K562 (cell line): ENCODE measurements at regions of chr19 and their contacts with region 1.

Region 1: GRCh38 chr19:6125571-6125989 is 9.9 kb upstream of the ACSBG2 start:
- DNase-seq: peak; percentile 70 to 85 (median 75)
- ATAC-seq: peak; percentile 93
- H3K4me3 ChIP-seq: no peak overlapping the region
- H3K27ac ChIP-seq: no peak overlapping the region
- H3K4me1 ChIP-seq: no peaks in the 10 kb centered on the region
- H3K27me3 ChIP-seq: no peaks in the 10 kb centered on the region
- CTCF ChIP-seq: peak; percentile 94 to 95 (median 95)
- EP300 ChIP-seq: no peak
- POLR2A ChIP-seq: no peak
- RAD21 ChIP-seq: peak; percentile 93 to 99

Region 2: GRCh38 chr19:5987077-5987818 is 138.3 kb before region 1 on chr19:
- CTCF ChIA-PET with region 1: interaction called, 3 read pairs
- POLR2A ChIA-PET with region 1: no interaction called
- in situ Hi-C with region 1: no loop called
- intact Hi-C with region 1: loop called (anchors 2 kb)
- DNase-seq: peak; percentile 63 to 87 (median 74)
- ATAC-seq: peak; percentile 22
- H3K4me3 ChIP-seq: peak overlapping the region; percentile 22
- H3K27ac ChIP-seq: peak overlapping the region; percentile 48
- H3K4me1 ChIP-seq: peaks cover 44 to 46% of the 10 kb centered on the region in 2 experiments
- H3K27me3 ChIP-seq: no peaks in the 10 kb centered on the region
- CTCF ChIP-seq: peak; percentile 87 to 96 (median 94)
- EP300 ChIP-seq: peak; percentile 32; the same call in 1 of the 2 replicates
- POLR2A ChIP-seq: no peak
- RAD21 ChIP-seq: peak; percentile 69 to 81

Region 3: DNA sequence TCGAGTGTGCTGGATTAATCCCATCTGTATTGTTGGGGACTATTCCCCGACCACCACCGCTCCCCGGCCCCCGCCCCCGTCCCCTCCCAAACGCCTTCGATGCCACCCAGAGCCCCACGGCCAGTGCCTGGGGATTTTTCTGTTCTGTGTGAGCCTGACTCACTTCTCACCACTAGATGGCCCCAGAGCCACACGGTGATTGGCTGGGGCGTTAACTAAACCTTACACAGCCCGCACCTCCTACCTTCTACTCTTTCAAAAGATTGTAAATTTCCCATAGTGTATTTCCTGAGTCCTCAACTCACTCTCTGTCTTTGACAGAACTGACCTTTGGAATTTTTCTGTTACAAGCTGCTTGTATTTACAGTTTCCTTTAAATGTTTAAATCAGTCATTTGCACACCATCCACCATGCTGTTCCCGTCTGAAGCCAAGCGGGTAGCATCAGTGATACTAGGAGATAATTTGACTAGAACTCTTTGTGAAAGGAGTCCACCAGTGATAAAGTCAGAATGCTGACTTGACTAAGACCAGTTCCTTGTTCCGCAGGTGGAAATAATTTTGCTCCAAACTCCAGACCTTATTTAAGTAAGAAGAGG is 76.7 kb before region 1 on chr19:
- CTCF ChIA-PET with region 1: interaction called, 152 read pairs
- POLR2A ChIA-PET with region 1: interaction called, 5 read pairs
- in situ Hi-C with region 1: no loop called
- intact Hi-C with region 1: loop called (anchors 1 kb)
- DNase-seq: peak; percentile 83 to 89 (median 85)
- ATAC-seq: peak; percentile 100
- H3K4me3 ChIP-seq: no peak overlapping the region
- H3K27ac ChIP-seq: no peak overlapping the region
- H3K4me1 ChIP-seq: peaks cover 4 to 9% of the 10 kb centered on the region in 2 experiments; a peak in 3 of 5 replicates
- H3K27me3 ChIP-seq: no peaks in the 10 kb centered on the region
- CTCF ChIP-seq: peak; percentile 76 to 93 (median 92)
- EP300 ChIP-seq: no peak
- POLR2A ChIP-seq: no peak
- RAD21 ChIP-seq: peak; percentile 84 to 96

Region 4: DNA sequence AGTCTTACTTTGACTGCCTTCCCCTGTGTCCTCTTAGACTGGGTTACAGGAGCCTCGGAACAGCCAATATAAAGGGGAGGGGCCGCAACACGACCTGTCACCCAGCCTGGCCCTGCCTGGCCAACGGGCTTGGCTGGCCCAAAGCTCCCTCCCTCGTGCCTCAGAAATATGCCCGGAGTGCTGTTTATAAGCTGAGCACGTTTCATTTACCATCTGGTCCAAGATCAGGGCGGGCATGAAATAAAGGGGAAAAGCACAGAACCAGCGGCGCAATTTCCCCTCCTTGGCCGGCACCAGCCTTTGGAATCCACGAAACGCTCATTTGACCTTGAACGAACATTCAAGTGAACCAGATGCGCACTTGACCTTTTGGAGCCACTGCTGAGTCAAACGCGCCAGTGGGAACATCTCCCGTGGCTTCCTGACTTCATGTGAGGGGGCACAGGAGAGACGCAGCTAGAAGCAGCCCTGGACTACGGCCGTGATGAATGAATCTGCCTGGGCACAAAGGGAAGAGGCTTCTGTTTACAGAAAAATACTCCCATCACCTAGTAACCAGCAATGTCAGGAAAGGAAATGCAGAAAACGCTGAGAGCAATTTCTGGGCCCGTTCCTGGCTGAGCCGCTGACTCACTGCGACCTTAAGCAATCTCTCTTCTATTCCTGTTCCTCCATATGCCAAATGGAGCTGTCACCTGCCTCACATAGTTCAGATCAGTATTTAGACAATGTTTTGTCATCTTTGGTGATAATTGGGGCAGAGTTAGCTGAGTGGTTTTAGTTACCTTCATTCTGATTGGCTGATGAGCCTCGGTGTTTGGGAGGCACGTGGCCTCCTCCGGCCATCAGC is 68.6 kb before region 1 on chr19:
- CTCF ChIA-PET with region 1: no interaction called
- POLR2A ChIA-PET with region 1: interaction called, 3 read pairs
- in situ Hi-C with region 1: loop called (anchors 5 kb)
- intact Hi-C with region 1: no loop called
- DNase-seq: peak in 2 of 4 experiments; percentile 50 to 53
- ATAC-seq: no peak
- H3K4me3 ChIP-seq: no peak overlapping the region
- H3K27ac ChIP-seq: peak overlapping the region; percentile 27
- H3K4me1 ChIP-seq: peaks cover 36 to 47% of the 10 kb centered on the region in 2 experiments
- H3K27me3 ChIP-seq: no peaks in the 10 kb centered on the region
- CTCF ChIP-seq: no peak
- EP300 ChIP-seq: no peak
- POLR2A ChIP-seq: no peak
- RAD21 ChIP-seq: no peak

Region 5: DNA sequence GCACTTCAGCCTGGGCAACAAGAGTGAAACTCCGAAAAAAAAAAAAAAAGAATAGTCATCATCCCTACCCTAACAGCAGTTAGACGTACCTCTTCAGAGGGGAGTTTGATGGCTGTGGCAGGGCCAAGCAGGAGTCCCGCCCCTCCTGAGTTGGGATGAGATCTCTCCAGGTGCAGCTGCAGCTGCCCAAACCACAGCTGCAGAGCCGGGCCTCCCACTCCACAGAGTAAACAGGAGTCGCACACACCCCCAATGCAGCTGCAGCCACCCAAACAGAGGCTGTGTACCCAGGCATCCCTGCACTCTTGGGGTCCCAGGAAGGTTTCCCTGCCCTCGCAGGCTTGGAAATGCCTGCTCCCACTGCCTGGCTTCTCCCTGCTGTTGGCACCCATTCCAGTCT is 171.6 kb after region 1 on chr19:
- CTCF ChIA-PET with region 1: interaction called, 4 read pairs
- POLR2A ChIA-PET with region 1: no interaction called
- in situ Hi-C with region 1: no loop called
- intact Hi-C with region 1: loop called (anchors 5 kb)
- DNase-seq: no peak
- ATAC-seq: no peak
- H3K4me3 ChIP-seq: no peak overlapping the region
- H3K27ac ChIP-seq: no peak overlapping the region
- H3K4me1 ChIP-seq: no peaks in the 10 kb centered on the region
- H3K27me3 ChIP-seq: 0 out of 5 replicates have a peak, but pooled peaks cover 0 to 4% of the 10 kb centered on the region in 2 experiments
- CTCF ChIP-seq: no peak
- EP300 ChIP-seq: no peak
- POLR2A ChIP-seq: no peak
- RAD21 ChIP-seq: no peak

Region 6: DNA sequence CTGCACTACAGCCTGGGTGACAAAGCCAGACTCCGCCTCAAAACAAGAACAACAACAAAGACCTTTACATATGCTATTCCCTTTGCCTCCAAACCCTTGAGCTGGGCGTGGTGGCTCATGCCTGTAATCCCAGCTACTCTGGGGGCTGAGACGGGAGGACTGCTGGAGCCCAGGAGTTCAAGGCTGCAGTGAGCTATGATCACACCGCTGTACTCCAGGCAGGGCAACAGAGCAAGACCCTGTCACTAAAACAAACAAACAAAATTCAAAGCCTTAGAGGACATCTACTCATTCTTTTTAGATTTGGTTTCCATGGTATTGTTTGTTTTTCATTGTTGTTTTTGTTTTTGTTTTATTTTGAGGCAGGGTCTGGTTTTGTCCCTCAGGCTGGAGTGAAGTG is 200.0 kb after region 1 on chr19:
- CTCF ChIA-PET with region 1: no interaction called
- POLR2A ChIA-PET with region 1: no interaction called
- in situ Hi-C with region 1: no loop called
- intact Hi-C with region 1: no loop called
- DNase-seq: no peak
- ATAC-seq: no peak
- H3K4me3 ChIP-seq: no peak overlapping the region
- H3K27ac ChIP-seq: no peak overlapping the region
- H3K4me1 ChIP-seq: no peaks in the 10 kb centered on the region
- H3K27me3 ChIP-seq: peaks cover 14 to 31% of the 10 kb centered on the region in 2 experiments
- CTCF ChIP-seq: no peak
- EP300 ChIP-seq: no peak
- POLR2A ChIP-seq: no peak
- RAD21 ChIP-seq: no peak

Region 7: GRCh38 chr19:6516659-6517291 is 391.2 kb after region 1 on chr19:
- CTCF ChIA-PET with region 1: no interaction called
- POLR2A ChIA-PET with region 1: no interaction called
- in situ Hi-C with region 1: no loop called
- intact Hi-C with region 1: loop called (anchors 10 kb)
- DNase-seq: peak; percentile 86 to 94 (median 90)
- ATAC-seq: peak; percentile 95
- H3K4me3 ChIP-seq: peak overlapping the region; percentile 54
- H3K27ac ChIP-seq: peak overlapping the region; percentile 83
- H3K4me1 ChIP-seq: peaks cover 7 to 38% of the 10 kb centered on the region in 2 experiments; a peak in 4 of 5 replicates
- H3K27me3 ChIP-seq: no peaks in the 10 kb centered on the region
- CTCF ChIP-seq: peak; percentile 96 to 97 (median 96)
- EP300 ChIP-seq: no peak; the same call in 1 of the 2 replicates
- POLR2A ChIP-seq: peak; percentile 59; the same call in 1 of the 2 replicates
- RAD21 ChIP-seq: peak; percentile 97 to 98

Region 8: GRCh38 chr19:6868351-6868750 is 742.8 kb after region 1 on chr19:
- CTCF ChIA-PET with region 1: interaction called, 19 read pairs
- POLR2A ChIA-PET with region 1: interaction called, 3 read pairs
- in situ Hi-C with region 1: loop called (anchors 5 kb)
- intact Hi-C with region 1: loop called (anchors 2 kb)
- DNase-seq: no peak
- ATAC-seq: no peak
- H3K4me3 ChIP-seq: no peak overlapping the region
- H3K27ac ChIP-seq: no peak overlapping the region
- H3K4me1 ChIP-seq: no peaks in the 10 kb centered on the region; a peak in 1 of 5 replicates
- H3K27me3 ChIP-seq: peaks cover 0 to 5% of the 10 kb centered on the region in 2 experiments; a peak in 2 of 5 replicates
- CTCF ChIP-seq: no peak
- EP300 ChIP-seq: no peak
- POLR2A ChIP-seq: no peak
- RAD21 ChIP-seq: no peak